Aorta (tissue), 5 donors: ENCODE measurements at regions of chr4 and their contacts with region 1.

Region 1: DNA sequence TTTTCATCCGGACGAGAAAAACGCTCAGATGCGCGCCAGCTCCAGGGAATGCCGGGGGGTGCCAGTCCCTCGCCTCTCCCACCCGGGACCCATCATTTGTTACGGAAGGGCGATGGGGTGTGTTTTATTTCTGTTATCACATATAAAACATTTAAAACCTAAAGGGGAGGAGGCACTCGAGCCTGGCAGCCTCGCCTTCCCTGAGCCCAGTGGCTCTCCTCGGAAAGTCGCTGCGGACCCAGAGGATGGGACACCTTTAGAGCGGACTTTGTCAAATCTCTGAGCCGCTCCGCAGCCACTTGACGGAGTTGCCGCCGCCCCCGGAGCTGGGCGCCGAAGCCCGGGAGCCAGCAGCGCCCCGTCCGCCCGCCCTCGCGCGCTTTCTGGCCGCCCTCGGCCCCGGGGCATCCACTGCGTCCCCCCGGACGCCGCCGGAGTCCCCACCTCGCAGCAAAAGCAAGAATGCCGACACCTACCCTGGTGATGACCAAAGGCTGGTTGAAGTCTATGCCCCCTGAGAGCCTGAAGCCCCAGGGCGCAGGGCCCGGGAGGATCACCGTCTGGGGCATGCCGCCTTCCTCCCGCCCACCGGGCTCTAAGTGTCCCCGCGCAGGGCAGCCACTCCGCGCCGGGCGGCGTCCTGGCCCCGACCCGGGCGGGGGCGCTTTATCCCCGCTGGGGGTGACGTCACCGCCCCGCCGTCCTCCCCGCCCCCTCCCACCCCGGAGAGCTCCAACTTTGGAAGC is at the start of gene PDLIM3:
- DNase-seq: peak; percentile 82 to 94
- ATAC-seq: peak; percentile 91
- H3K4me3 ChIP-seq: peak within 1 kb of the TSS; percentile 91 to 99
- H3K27ac ChIP-seq: peak within 1 kb of the TSS; percentile 95 to 100
- H3K4me1 ChIP-seq: peaks cover 0 to 2% of the 10 kb centered on the region in 2 donors
- H3K27me3 ChIP-seq: no peaks in the 10 kb centered on the region
- total RNA-seq, gene PDLIM3: 411 to 805 TPM

Region 2: GRCh38 chr4:185395956-185396723 is 138.9 kb before region 1 on chr4:
- intact Hi-C with region 1: loop called in 1 of 2 experiments (anchors 2 kb)
- DNase-seq: peak; percentile 98
- ATAC-seq: peak; percentile 98
- H3K4me3 ChIP-seq: peak overlapping the region; percentile 71 to 76
- H3K27ac ChIP-seq: peak overlapping the region; percentile 89 to 98
- H3K4me1 ChIP-seq: no peaks in the 10 kb centered on the region
- H3K27me3 ChIP-seq: no peaks in the 10 kb centered on the region

Region 3: DNA sequence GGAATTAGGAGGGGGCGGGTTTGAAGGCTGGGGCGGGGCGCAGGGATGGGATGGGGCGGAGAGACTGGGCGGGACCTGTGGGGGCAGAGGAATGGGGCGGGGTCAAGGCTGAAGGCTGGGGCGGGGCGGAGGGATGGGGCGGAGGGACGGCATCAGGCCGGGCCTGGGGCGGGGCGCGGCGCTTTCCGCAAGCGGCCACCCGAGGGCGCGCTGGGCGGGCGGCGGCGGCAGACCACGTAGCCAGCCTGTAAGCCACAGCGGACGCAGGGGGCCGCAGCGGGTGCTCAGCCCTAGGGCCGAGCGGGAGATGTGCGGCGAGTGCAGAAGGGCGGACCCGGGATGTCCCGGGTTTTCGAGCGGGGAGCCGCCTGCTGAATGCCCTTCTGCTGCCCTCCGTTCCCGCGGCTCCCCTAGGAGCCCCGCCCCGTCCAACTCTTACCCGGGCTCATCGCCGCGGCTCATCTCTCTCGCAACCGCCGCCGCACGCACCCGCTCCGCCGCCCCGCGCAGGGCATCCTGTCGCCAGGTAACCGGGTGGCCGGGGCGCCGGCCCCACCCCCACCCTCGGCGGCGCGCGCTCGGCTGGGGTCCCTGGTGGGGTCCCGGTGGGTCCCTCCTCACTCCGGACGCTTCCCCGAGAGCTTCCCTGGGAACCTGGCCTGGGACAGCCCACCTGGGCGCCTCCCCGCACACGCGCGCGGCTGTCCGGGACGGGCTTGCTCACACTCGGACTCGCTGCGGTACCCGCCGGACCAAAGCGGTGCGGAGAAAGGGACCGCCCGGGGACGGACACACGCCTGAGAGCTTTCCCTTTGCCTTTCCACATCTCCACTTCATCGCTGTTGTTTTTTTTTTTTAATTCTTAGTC is 63.6 kb before region 1 on chr4 and contains the start of gene CCDC110:
- intact Hi-C with region 1: loop called in 1 of 2 experiments (anchors 5 kb)
- DNase-seq: peak; percentile 95 to 98
- ATAC-seq: peak; percentile 98
- H3K4me3 ChIP-seq: peak within 1 kb of the TSS; percentile 73 to 97
- H3K27ac ChIP-seq: peak within 1 kb of the TSS in 1 of 2 donors; percentile 61
- H3K4me1 ChIP-seq: no peaks in the 10 kb centered on the region
- H3K27me3 ChIP-seq: no peaks in the 10 kb centered on the region
- total RNA-seq, gene CCDC110: 3.0 to 3.8 TPM

Region 4: GRCh38 chr4:185566972-185567371 is 31.9 kb after region 1 on chr4:
- intact Hi-C with region 1: loop called (anchors 5 kb)
- DNase-seq: peak in 1 of 2 donors; percentile 69
- ATAC-seq: peak; percentile 85
- H3K4me3 ChIP-seq: no peak overlapping the region
- H3K27ac ChIP-seq: peak overlapping the region; percentile 99 to 100
- H3K4me1 ChIP-seq: peaks cover 5 to 9% of the 10 kb centered on the region in 2 donors
- H3K27me3 ChIP-seq: no peaks in the 10 kb centered on the region

Region 5: DNA sequence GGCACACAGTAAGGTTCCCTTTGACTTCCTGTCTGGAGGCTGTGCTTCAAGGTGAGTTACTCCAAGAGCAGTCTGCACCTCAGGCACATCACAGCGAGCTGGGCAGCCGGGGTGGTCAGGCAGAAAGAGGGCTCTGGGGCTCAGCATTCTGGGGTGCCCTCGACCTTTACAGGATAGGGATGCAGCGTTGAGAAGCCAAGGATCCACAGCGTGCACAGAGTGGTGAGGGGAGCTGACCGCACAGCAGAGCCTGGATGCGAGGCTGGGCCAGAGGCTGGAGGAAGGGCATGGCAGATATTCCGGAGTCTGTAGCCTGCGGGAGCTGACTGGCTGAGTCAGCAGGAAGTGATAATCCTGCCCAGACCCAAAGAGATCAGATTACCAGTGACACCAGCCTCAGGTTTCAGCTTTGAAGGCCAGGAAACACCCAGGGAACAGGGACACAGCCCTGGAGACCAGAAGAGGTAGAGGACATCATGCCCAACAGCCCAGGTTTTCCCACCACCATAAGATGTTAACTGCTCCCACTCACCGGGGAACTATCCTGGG is 38.7 kb after region 1 on chr4:
- intact Hi-C with region 1: loop called (anchors 5 kb)
- DNase-seq: peak; percentile 71 to 77
- ATAC-seq: peak; percentile 71
- H3K4me3 ChIP-seq: no peak overlapping the region
- H3K27ac ChIP-seq: peak overlapping the region in 1 of 2 donors; percentile 72
- H3K4me1 ChIP-seq: peaks cover 0 to 2% of the 10 kb centered on the region in 2 donors
- H3K27me3 ChIP-seq: no peaks in the 10 kb centered on the region

Region 6: GRCh38 chr4:185591679-185592141 is 56.7 kb after region 1 on chr4:
- intact Hi-C with region 1: loop called (anchors 5 kb)
- DNase-seq: no peak
- ATAC-seq: no peak
- H3K4me3 ChIP-seq: no peak overlapping the region
- H3K27ac ChIP-seq: peak overlapping the region in 1 of 2 donors; percentile 7
- H3K4me1 ChIP-seq: peaks cover 0 to 5% of the 10 kb centered on the region in 2 donors
- H3K27me3 ChIP-seq: no peaks in the 10 kb centered on the region

Region 7: GRCh38 chr4:185597532-185598188 is 62.6 kb after region 1 on chr4:
- intact Hi-C with region 1: loop called (anchors 5 kb)
- DNase-seq: peak; percentile 84 to 93
- ATAC-seq: peak; percentile 84
- H3K4me3 ChIP-seq: no peak overlapping the region
- H3K27ac ChIP-seq: peak overlapping the region; percentile 25 to 89
- H3K4me1 ChIP-seq: peaks cover 0 to 3% of the 10 kb centered on the region in 2 donors
- H3K27me3 ChIP-seq: no peaks in the 10 kb centered on the region